Activated B cell treated with CpG ODN at 0.5 μM for 24 hours (primary cell): ENCODE measurements at regions of chr7 and their contacts with region 1.

Region 1: DNA sequence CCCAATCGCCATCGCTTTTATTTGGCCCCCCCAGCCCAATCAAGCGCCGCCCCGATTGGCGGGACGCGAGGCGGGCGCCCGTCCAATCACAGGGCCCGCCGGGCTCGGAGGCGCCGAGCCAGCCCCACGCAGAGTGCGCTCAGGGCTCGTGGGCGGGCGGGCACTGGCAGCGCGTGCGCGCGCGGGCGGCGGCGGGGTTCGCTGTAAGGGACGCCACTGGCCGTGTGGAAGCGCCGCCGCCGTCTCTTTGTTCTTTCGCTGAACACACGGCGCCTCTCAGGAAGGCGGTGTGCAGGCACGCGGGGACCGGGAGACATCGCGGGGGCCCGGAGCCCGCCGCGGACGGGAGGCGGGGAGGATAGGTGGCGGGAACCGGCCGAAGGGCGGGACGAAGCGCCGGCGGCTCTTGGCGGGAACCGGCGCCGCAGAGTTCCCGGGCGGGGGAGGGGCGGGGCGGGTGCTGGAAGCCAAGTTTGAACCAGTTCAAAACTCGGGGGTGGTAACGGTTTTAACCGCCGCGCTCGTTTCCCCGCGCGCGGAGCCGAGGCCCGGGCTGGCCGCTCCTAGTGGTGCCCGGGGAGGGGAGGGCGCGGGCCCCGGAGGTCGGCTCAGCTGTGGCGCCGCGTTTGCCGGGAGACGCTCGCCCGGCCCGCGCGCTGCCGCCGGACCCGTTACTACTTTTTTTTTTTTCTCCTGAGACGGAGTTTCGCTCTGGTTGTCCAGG is 370 bp upstream of the EZH2 start:
- DNase-seq: peak; percentile 95
- ATAC-seq: peak; percentile 93
- H3K4me3 Mint-ChIP-seq: peak overlapping the region; percentile 87
- H3K27ac Mint-ChIP-seq: peak overlapping the region; percentile 82
- H3K4me1 Mint-ChIP-seq: peaks cover 26% of the 10 kb centered on the region
- H3K27me3 Mint-ChIP-seq: no peaks in the 10 kb centered on the region
- CTCF ChIP-seq: no peak

Region 2: GRCh38 chr7:148650232-148650858 is 234.1 kb before region 1 on chr7:
- CTCF ChIA-PET with region 1: no interaction called
- POLR2A ChIA-PET with region 1: no interaction called
- intact Hi-C with region 1: no loop called
- DNase-seq: no peak
- ATAC-seq: no peak
- H3K4me3 Mint-ChIP-seq: no peak overlapping the region
- H3K27ac Mint-ChIP-seq: no peak overlapping the region
- H3K4me1 Mint-ChIP-seq: no peaks in the 10 kb centered on the region
- H3K27me3 Mint-ChIP-seq: peaks cover 2% of the 10 kb centered on the region
- CTCF ChIP-seq: no peak

Region 3: GRCh38 chr7:148867596-148868377 is 16.7 kb before region 1 on chr7:
- CTCF ChIA-PET with region 1: interaction called, 3 read pairs
- POLR2A ChIA-PET with region 1: no interaction called
- intact Hi-C with region 1: loop called (anchors 2 kb)
- DNase-seq: no peak
- ATAC-seq: no peak
- H3K4me3 Mint-ChIP-seq: no peak overlapping the region
- H3K27ac Mint-ChIP-seq: peak overlapping the region; percentile 54
- H3K4me1 Mint-ChIP-seq: peaks cover 33% of the 10 kb centered on the region
- H3K27me3 Mint-ChIP-seq: no peaks in the 10 kb centered on the region
- CTCF ChIP-seq: no peak

Region 4: GRCh38 chr7:148940702-148941597 is 56.5 kb after region 1 on chr7:
- CTCF ChIA-PET with region 1: interaction called, 3 read pairs
- POLR2A ChIA-PET with region 1: interaction called, 38 read pairs
- intact Hi-C with region 1: loop called (anchors 1 kb)
- DNase-seq: peak; percentile 68
- ATAC-seq: peak; percentile 77
- H3K4me3 Mint-ChIP-seq: peak overlapping the region; percentile 97
- H3K27ac Mint-ChIP-seq: peak overlapping the region; percentile 99
- H3K4me1 Mint-ChIP-seq: peaks cover 17% of the 10 kb centered on the region
- H3K27me3 Mint-ChIP-seq: no peaks in the 10 kb centered on the region
- CTCF ChIP-seq: no peak

Region 5: GRCh38 chr7:148987010-148987750 is 102.7 kb after region 1 on chr7:
- CTCF ChIA-PET with region 1: no interaction called
- POLR2A ChIA-PET with region 1: no interaction called
- intact Hi-C with region 1: loop called (anchors 1 kb)
- DNase-seq: peak; percentile 60
- ATAC-seq: peak; percentile 85
- H3K4me3 Mint-ChIP-seq: peak overlapping the region; percentile 96
- H3K27ac Mint-ChIP-seq: peak overlapping the region; percentile 93
- H3K4me1 Mint-ChIP-seq: peaks cover 50% of the 10 kb centered on the region
- H3K27me3 Mint-ChIP-seq: peaks cover 2% of the 10 kb centered on the region
- CTCF ChIP-seq: no peak

Region 6: DNA sequence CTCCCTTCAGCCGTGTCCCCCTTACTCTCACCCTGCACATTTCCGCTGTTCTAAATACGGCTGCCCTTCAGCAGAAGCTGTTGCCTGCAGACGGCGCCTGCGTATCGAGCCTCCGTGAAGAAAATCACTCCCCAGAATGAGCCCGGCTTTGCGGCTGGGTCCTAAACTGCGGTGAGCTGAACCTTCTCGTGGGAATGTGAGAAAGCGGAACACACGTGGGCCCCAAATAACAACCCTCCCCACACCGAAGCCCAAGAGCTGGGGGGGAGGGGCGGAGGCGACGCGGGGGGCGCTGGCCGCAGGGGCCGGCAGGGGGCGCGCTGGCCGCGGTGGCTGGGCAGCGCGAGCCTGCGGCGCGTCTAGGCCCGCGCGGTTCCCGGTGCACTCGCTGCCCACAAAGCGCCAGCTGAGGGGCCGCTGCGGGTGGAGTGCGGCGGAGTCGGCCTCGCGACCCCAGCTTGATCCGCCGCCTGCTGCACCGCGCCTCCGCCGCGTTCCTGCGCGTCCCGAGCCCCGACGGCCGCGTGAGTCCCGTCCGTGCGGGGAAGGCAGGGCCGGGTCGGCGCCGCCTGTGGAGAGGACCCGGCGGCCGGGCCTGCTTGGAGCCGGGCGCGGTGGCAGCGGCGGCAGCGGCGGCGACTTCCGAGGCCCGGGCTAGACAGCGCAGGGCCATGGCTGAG is 262.8 kb after region 1 on chr7 and contains the start of gene ZNF398:
- CTCF ChIA-PET with region 1: no interaction called
- POLR2A ChIA-PET with region 1: no interaction called
- intact Hi-C with region 1: loop called (anchors 2 kb)
- DNase-seq: peak; percentile 87
- ATAC-seq: peak; percentile 84
- H3K4me3 Mint-ChIP-seq: peak within 1 kb of the TSS; percentile 91
- H3K27ac Mint-ChIP-seq: peak within 1 kb of the TSS; percentile 94
- H3K4me1 Mint-ChIP-seq: peaks cover 32% of the 10 kb centered on the region
- H3K27me3 Mint-ChIP-seq: no peaks in the 10 kb centered on the region
- CTCF ChIP-seq: no peak
- total RNA-seq, gene ZNF398: 15.1 and 17.3 TPM in 2 replicates

Region 7: GRCh38 chr7:149188637-149189259 is 304.3 kb after region 1 on chr7:
- CTCF ChIA-PET with region 1: no interaction called
- POLR2A ChIA-PET with region 1: no interaction called
- intact Hi-C with region 1: no loop called
- DNase-seq: no peak
- ATAC-seq: no peak
- H3K4me3 Mint-ChIP-seq: no peak overlapping the region
- H3K27ac Mint-ChIP-seq: no peak overlapping the region
- H3K4me1 Mint-ChIP-seq: peaks cover 10% of the 10 kb centered on the region
- H3K27me3 Mint-ChIP-seq: no peaks in the 10 kb centered on the region
- CTCF ChIP-seq: no peak